ENCODE measurements at regions of chr15 and their contacts with region 1.

Region 1: GRCh38 chr15:57561041-57561711 is 30.5 kb upstream of the MYZAP start:
- DNase-seq: peak; percentile 83
- ATAC-seq: peak; percentile 85
- H3K4me3 ChIP-seq: peak overlapping the region in 4 of 5 experiments; percentile 6 to 37 (median 32)
- H3K4me3 Mint-ChIP-seq: peak overlapping the region; percentile 76
- H3K27ac ChIP-seq: no peak overlapping the region
- H3K27ac Mint-ChIP-seq: peak overlapping the region; percentile 62
- H3K4me1 ChIP-seq: peaks cover 29 to 31% of the 10 kb centered on the region in 2 donors
- H3K4me1 Mint-ChIP-seq: peaks cover 35% of the 10 kb centered on the region
- H3K27me3 ChIP-seq: no peaks in the 10 kb centered on the region
- H3K27me3 Mint-ChIP-seq: peaks cover 1% of the 10 kb centered on the region
- CTCF ChIP-seq: peak; percentile 94

Region 2: DNA sequence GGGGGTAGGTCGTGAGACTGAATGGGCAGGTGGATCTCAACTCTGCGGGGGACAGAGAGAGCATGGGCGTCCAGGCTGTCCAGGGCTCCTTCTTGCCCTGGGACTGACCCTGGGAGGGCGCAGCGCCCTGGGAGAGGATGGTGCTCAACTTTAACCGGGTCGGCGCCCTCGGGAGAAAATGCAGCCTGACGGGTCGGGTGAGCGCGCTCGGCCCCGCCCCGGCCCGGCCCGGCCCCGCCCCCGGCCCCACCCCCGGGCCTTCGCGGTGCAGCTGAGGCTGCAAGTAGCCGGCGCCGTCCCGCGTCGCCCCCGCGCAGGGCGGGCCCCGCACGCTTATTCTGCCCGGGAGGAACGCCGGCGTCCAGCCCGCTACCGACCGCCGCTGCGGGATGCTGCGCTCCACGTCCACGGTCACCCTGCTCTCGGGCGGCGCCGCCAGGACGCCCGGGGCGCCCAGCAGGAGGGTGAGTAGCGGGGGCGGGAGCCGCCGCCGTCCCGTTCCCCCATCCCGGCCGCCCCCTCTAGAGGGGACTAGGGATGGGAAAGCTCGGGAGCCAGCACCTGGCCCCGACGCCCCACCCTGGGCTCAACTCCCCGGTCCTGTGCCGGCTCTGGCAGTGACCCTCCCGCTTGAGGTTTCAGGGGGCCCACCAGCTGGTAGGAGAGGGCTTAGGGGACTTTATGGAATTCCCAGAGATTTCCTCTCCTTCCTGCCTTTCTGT is 30.6 kb after region 1 on chr15 and contains the start of gene MYZAP:
- CTCF ChIA-PET with region 1: interaction called, 11 read pairs
- POLR2A ChIA-PET with region 1: no interaction called
- intact Hi-C with region 1: loop called (anchors 2 kb)
- DNase-seq: peak; percentile 69
- ATAC-seq: peak; percentile 92
- H3K4me3 ChIP-seq: peak within 1 kb of the TSS in 4 of 5 experiments; percentile 40 to 70 (median 60)
- H3K4me3 Mint-ChIP-seq: peak within 1 kb of the TSS; percentile 82
- H3K27ac ChIP-seq: no peak within 1 kb of the TSS
- H3K27ac Mint-ChIP-seq: peak within 1 kb of the TSS; percentile 42
- H3K4me1 ChIP-seq: peaks cover 46 to 48% of the 10 kb centered on the region in 2 donors
- H3K4me1 Mint-ChIP-seq: peaks cover 49% of the 10 kb centered on the region
- H3K27me3 ChIP-seq: peaks cover 0 to 3% (median 0%) of the 10 kb centered on the region in 4 experiments
- H3K27me3 Mint-ChIP-seq: peaks cover 10% of the 10 kb centered on the region
- CTCF ChIP-seq: no peak
- total RNA-seq, gene MYZAP: 1.0 and 1.4 TPM in 2 replicates

Region 3: GRCh38 chr15:57635300-57635909 is 74.2 kb after region 1 on chr15:
- CTCF ChIA-PET with region 1: interaction called, 12 read pairs
- POLR2A ChIA-PET with region 1: no interaction called
- intact Hi-C with region 1: no loop called
- DNase-seq: no peak
- ATAC-seq: no peak
- H3K4me3 ChIP-seq: no peak overlapping the region
- H3K4me3 Mint-ChIP-seq: no peak overlapping the region
- H3K27ac ChIP-seq: no peak overlapping the region
- H3K27ac Mint-ChIP-seq: no peak overlapping the region
- H3K4me1 ChIP-seq: no peaks in the 10 kb centered on the region
- H3K4me1 Mint-ChIP-seq: no peaks in the 10 kb centered on the region
- H3K27me3 ChIP-seq: no peaks in the 10 kb centered on the region
- H3K27me3 Mint-ChIP-seq: no peaks in the 10 kb centered on the region
- CTCF ChIP-seq: no peak

Region 4: GRCh38 chr15:57654153-57654852 is 93.1 kb after region 1 on chr15:
- CTCF ChIA-PET with region 1: interaction called, 33 read pairs
- POLR2A ChIA-PET with region 1: no interaction called
- intact Hi-C with region 1: loop called (anchors 5 kb)
- DNase-seq: no peak
- ATAC-seq: no peak
- H3K4me3 ChIP-seq: no peak overlapping the region
- H3K4me3 Mint-ChIP-seq: no peak overlapping the region
- H3K27ac ChIP-seq: no peak overlapping the region
- H3K27ac Mint-ChIP-seq: no peak overlapping the region
- H3K4me1 ChIP-seq: no peaks in the 10 kb centered on the region
- H3K4me1 Mint-ChIP-seq: no peaks in the 10 kb centered on the region
- H3K27me3 ChIP-seq: no peaks in the 10 kb centered on the region
- H3K27me3 Mint-ChIP-seq: peaks cover 9% of the 10 kb centered on the region
- CTCF ChIP-seq: no peak

Region 5: DNA sequence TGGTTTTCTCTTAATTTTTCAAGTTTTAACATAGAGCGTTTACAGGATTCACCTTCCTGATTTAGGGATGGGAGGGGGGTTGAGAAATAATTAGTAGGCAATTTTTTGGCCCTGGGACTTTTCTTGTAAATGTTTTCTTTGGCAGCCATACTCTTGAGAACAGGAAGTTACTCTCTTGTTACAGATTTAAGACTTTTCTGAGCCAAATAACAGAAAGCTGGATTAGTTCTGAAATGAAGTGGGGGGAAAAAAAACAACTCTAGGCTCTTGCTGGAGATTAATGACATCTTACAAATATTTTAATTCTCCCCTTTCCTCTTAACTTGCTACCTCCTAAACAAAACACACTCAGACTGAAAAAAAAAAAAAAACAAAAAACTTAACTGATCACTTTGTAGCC is 131.5 kb after region 1 on chr15:
- CTCF ChIA-PET with region 1: no interaction called
- POLR2A ChIA-PET with region 1: no interaction called
- intact Hi-C with region 1: no loop called
- DNase-seq: no peak
- ATAC-seq: no peak
- H3K4me3 ChIP-seq: no peak overlapping the region
- H3K4me3 Mint-ChIP-seq: no peak overlapping the region
- H3K27ac ChIP-seq: no peak overlapping the region
- H3K27ac Mint-ChIP-seq: no peak overlapping the region
- H3K4me1 ChIP-seq: no peaks in the 10 kb centered on the region
- H3K4me1 Mint-ChIP-seq: no peaks in the 10 kb centered on the region
- H3K27me3 ChIP-seq: peaks cover 0 to 8% (median 0%) of the 10 kb centered on the region in 4 experiments
- H3K27me3 Mint-ChIP-seq: peaks cover 36% of the 10 kb centered on the region
- CTCF ChIP-seq: no peak

Region 6: DNA sequence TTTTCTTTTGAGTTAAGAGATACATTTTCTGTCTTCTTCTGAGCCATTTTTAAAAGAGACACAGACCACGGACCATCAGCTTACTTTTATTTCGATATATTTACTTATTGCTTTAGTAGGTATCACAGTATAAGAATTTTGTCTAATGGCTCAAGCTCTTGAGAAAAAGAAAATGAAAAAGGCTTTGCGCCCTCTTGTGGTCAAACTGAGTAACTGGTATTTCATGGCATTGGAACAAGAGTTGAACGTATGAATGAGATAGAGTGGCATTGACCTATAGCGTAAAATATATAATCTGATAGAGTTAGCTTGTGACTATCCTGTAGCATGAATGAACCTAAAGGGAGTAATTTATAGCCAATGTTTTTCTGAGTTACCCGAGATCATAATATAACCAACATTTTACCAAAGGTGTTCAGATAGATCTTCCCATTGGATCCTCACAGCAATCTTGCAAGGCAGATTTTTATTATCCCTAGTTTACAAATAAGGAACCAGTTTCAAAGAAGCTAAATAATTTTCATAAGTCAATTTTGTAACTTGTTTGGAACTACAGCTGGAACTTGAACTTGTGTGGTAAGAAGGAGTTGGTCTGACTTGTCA is 300.0 kb after region 1 on chr15:
- CTCF ChIA-PET with region 1: interaction called, 68 read pairs
- POLR2A ChIA-PET with region 1: interaction called, 3 read pairs
- intact Hi-C with region 1: loop called (anchors 1 kb)
- DNase-seq: peak; percentile 69
- ATAC-seq: no peak
- H3K4me3 ChIP-seq: no peak overlapping the region
- H3K4me3 Mint-ChIP-seq: no peak overlapping the region
- H3K27ac ChIP-seq: no peak overlapping the region
- H3K27ac Mint-ChIP-seq: no peak overlapping the region
- H3K4me1 ChIP-seq: no peaks in the 10 kb centered on the region
- H3K4me1 Mint-ChIP-seq: no peaks in the 10 kb centered on the region
- H3K27me3 ChIP-seq: peaks cover 0 to 2% (median under 1%) of the 10 kb centered on the region in 4 experiments
- H3K27me3 Mint-ChIP-seq: peaks cover 52% of the 10 kb centered on the region
- CTCF ChIP-seq: peak; percentile 93

Region 7: DNA sequence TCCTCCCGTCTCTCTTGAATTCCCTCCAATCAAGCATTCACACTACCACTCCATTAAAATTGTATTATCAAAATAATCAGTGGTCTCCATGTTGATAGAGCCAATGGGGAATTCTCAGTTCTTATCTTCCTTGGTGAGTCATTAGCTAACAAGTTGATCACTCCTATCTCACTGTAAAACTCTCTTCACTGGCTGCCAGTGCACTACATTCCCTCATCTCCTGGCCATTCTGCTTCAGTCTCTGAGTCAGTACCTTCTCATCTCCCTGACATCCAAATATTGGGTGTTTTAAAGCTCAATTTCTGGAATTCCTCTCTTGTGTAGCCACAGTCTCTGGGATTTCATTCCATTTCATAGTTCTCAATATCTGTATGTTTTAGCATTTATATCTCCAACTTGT is 329.2 kb after region 1 on chr15:
- CTCF ChIA-PET with region 1: no interaction called
- POLR2A ChIA-PET with region 1: no interaction called
- intact Hi-C with region 1: no loop called
- DNase-seq: no peak
- ATAC-seq: no peak
- H3K4me3 ChIP-seq: no peak overlapping the region
- H3K4me3 Mint-ChIP-seq: no peak overlapping the region
- H3K27ac ChIP-seq: no peak overlapping the region
- H3K27ac Mint-ChIP-seq: no peak overlapping the region
- H3K4me1 ChIP-seq: no peaks in the 10 kb centered on the region
- H3K4me1 Mint-ChIP-seq: no peaks in the 10 kb centered on the region
- H3K27me3 ChIP-seq: peaks cover 0 to 7% (median 0%) of the 10 kb centered on the region in 4 experiments
- H3K27me3 Mint-ChIP-seq: peaks cover 27% of the 10 kb centered on the region
- CTCF ChIP-seq: no peak